ENCODE measurements at regions of chr2 and their contacts with region 1.

Region 1: DNA sequence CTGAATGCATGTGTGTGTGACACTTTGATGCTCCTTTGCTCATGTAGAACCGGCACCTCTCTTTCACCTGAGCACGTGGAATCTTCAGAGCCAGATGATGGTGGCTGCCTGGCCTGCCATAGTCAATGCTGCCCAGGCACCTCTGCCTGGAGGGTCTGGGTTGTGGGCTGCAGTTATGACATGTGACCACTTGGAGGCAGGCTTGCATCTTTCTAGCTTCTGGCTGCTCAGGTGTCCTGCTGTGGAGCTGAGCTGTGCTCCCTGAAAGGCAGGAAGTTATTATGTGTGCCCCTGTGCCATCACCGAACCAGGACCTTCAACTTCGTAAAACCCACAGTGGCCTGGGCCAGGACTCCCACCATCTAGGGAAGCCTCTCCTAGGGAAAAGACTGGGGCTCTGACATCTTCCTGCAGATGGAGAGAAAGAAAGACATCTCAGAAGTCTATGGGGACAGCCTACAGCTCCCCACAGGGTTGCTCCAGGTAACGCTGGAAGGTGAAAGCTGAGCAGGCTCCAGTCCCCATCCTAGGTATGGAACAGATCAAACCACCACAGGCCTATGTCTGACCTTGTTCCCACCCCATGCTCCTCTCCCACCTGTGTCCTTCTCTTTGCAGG is 30.2 kb downstream of the PSD4 start:
- DNase-seq: peak; percentile 72 to 83 (median 78)
- H3K4me3 ChIP-seq: no peak overlapping the region
- H3K27ac ChIP-seq: no peak overlapping the region
- H3K4me1 ChIP-seq: peaks cover 0 to 9% (median 7%) of the 10 kb centered on the region in 4 experiments
- H3K27me3 ChIP-seq: no peaks in the 10 kb centered on the region

Region 2: DNA sequence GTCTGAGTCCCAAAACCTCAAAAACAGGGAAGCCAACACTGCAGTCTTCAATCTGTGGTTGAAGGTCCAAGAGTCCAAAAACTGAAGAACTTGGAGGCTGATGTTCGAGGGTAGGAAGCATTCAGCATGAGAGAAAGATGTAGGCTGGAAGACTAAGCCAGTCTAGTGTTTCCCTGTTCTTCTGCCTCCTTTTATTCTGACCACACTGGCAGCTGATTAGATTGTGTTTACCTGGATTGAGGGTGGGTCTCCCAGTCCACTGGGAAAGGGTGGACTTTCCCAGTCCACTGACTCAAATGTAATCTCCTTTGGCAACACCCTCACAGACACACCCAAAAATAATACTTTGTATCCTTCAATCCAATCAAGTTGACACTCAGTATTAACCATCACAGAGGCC is 339.9 kb before region 1 on chr2:
- CTCF ChIA-PET with region 1: no interaction called
- POLR2A ChIA-PET with region 1: no interaction called
- DNase-seq: no peak
- H3K4me3 ChIP-seq: no peak overlapping the region
- H3K27ac ChIP-seq: no peak overlapping the region
- H3K4me1 ChIP-seq: peaks cover 3 to 7% (median 5%) of the 10 kb centered on the region in 4 experiments
- H3K27me3 ChIP-seq: no peaks in the 10 kb centered on the region

Region 3: GRCh38 chr2:113181258-113182051 is 22.6 kb before region 1 on chr2:
- CTCF ChIA-PET with region 1: interaction called, 80 read pairs
- POLR2A ChIA-PET with region 1: no interaction called
- DNase-seq: peak in 2 of 3 donors; percentile 71 to 82
- H3K4me3 ChIP-seq: peak overlapping the region in 3 of 7 experiments; percentile 9 to 34 (median 15)
- H3K27ac ChIP-seq: no peak overlapping the region
- H3K4me1 ChIP-seq: peaks cover 3 to 44% (median 37%) of the 10 kb centered on the region in 4 experiments
- H3K27me3 ChIP-seq: no peaks in the 10 kb centered on the region

Region 4: GRCh38 chr2:113219889-113220641 is 16.1 kb after region 1 on chr2:
- CTCF ChIA-PET with region 1: interaction called, 96 read pairs
- POLR2A ChIA-PET with region 1: no interaction called
- DNase-seq: peak in 2 of 3 donors; percentile 50 to 54
- H3K4me3 ChIP-seq: no peak overlapping the region
- H3K27ac ChIP-seq: no peak overlapping the region
- H3K4me1 ChIP-seq: peaks cover 17 to 64% (median 58%) of the 10 kb centered on the region in 4 experiments
- H3K27me3 ChIP-seq: no peaks in the 10 kb centered on the region

Region 5: GRCh38 chr2:113240150-113240862 is 36.3 kb after region 1 on chr2:
- CTCF ChIA-PET with region 1: interaction called, 146 read pairs
- POLR2A ChIA-PET with region 1: no interaction called
- DNase-seq: peak in 2 of 3 donors; percentile 51 to 59
- H3K4me3 ChIP-seq: peak overlapping the region in 3 of 7 experiments; percentile 12 to 31 (median 25)
- H3K27ac ChIP-seq: no peak overlapping the region
- H3K4me1 ChIP-seq: peaks cover 4 to 47% (median 22%) of the 10 kb centered on the region in 4 experiments
- H3K27me3 ChIP-seq: no peaks in the 10 kb centered on the region

Region 6: GRCh38 chr2:113337809-113338208 is 133.8 kb after region 1 on chr2:
- CTCF ChIA-PET with region 1: no interaction called
- POLR2A ChIA-PET with region 1: no interaction called
- DNase-seq: no peak
- H3K4me3 ChIP-seq: no peak overlapping the region
- H3K27ac ChIP-seq: no peak overlapping the region
- H3K4me1 ChIP-seq: peaks cover 0 to 6% (median 5%) of the 10 kb centered on the region in 4 experiments
- H3K27me3 ChIP-seq: peaks cover 0 to 7% (median 2%) of the 10 kb centered on the region in 5 experiments

Region 7: GRCh38 chr2:113370478-113371091 is 166.6 kb after region 1 on chr2:
- CTCF ChIA-PET with region 1: interaction called, 65 read pairs
- POLR2A ChIA-PET with region 1: no interaction called
- DNase-seq: peak; percentile 60 to 84 (median 84)
- H3K4me3 ChIP-seq: no peak overlapping the region
- H3K27ac ChIP-seq: no peak overlapping the region
- H3K4me1 ChIP-seq: peaks cover 2 to 20% (median 18%) of the 10 kb centered on the region in 4 experiments
- H3K27me3 ChIP-seq: no peaks in the 10 kb centered on the region